CD8-positive, alpha-beta memory T cell (primary cell): ENCODE measurements at regions of chr7 and their contacts with region 1.

Region 1: DNA sequence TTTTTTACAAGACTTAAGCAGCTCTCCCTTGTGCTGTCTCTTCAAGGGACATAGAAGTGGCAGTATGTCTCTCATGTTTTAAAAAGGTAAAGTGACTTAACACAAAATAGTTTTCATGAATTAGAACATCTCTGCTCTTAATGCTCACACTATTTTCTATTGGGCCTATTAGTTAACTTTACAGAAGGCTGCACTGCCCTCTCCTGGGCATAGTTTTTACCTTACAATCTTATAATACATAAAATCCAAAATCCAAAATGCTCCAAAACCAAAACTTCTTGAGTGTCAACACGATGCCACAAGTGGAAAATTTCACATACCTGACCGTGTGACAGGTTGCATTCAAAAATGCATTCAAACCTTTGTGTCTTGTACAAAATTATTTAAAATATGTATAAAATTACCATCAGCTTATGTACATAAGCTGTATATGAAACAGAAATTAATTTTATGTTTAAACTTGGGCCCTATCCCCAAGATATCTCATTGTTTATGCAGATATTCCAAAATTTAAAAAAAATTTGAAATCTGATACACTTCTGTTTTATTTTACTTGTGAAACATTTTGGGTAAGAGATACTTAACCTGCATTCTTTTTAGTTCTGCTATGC is 25.8 kb downstream of the TES start:
- DNase-seq: peak; percentile 36 to 67 (median 52)
- H3K4me3 ChIP-seq: no peak overlapping the region
- H3K4me3 Mint-ChIP-seq: no peak overlapping the region
- H3K27ac ChIP-seq: no peak overlapping the region
- H3K27ac Mint-ChIP-seq: peak overlapping the region in 5 of 8 donors; percentile 0 to 77 (median 25)
- H3K4me1 ChIP-seq: peaks cover 43% of the 10 kb centered on the region
- H3K4me1 Mint-ChIP-seq: peaks cover 80 to 90% (median 87%) of the 10 kb centered on the region in 3 donors
- H3K27me3 ChIP-seq: no peaks in the 10 kb centered on the region
- H3K27me3 Mint-ChIP-seq: no peaks in the 10 kb centered on the region

Region 2: GRCh38 chr7:116180302-116180701 is 55.8 kb before region 1 on chr7:
- CTCF ChIA-PET with region 1: interaction called, 167 read pairs
- POLR2A ChIA-PET with region 1: interaction called, 5 read pairs
- DNase-seq: peak in 3 of 5 donors; percentile 9 to 58 (median 47)
- H3K4me3 ChIP-seq: no peak overlapping the region
- H3K4me3 Mint-ChIP-seq: no peak overlapping the region
- H3K27ac ChIP-seq: no peak overlapping the region
- H3K27ac Mint-ChIP-seq: no peak overlapping the region
- H3K4me1 ChIP-seq: no peaks in the 10 kb centered on the region
- H3K4me1 Mint-ChIP-seq: peaks cover 6 to 10% (median 9%) of the 10 kb centered on the region in 3 donors
- H3K27me3 ChIP-seq: no peaks in the 10 kb centered on the region
- H3K27me3 Mint-ChIP-seq: peaks cover 3 to 4% of the 10 kb centered on the region in 2 donors

Region 3: DNA sequence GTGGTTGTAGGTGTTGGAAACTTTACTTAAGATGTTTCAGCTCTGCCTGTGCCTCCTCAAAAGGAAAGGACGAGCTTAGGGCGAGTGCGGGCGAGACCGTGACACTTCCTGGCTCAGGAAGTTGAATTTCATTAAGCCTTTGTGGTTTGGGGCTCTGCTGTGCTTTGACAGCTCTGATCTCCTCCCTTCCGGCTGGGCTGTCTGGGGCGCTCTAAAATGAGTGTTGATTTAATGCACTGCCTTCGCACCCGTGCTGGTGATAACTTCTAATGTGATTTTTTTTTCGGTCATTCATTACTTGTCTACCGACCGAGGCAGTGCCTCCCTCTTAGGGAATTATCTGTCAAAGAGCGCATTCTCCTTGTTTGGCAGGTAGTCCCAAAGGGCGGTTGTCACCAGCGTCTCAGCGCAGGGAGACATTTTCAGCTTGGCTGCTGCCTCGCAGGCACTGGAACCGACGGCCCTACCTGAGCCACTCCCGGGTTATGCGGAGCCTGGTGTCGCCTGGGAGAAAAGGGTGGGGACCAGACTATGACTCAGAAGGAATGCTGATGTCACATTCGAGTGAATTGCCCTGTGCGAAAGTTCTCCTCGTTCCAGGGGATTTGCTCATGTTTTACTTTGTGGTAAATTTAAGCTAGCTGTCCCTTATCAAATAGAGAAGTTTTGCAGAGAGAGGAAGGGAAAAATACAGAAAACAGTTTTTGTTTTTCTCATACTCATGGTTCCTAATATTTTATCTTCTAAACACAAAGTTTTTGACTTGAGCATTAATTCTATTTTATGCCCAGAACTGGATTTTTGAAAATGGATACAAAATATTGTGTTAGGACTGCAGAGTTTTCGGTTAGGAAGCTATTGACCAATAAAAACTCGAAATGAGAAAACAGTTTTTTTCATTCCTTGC is 24.9 kb before region 1 on chr7:
- CTCF ChIA-PET with region 1: interaction called, 71 read pairs
- POLR2A ChIA-PET with region 1: interaction called, 10 read pairs
- DNase-seq: peak; percentile 69 to 86 (median 86)
- H3K4me3 ChIP-seq: peak overlapping the region; percentile 83
- H3K4me3 Mint-ChIP-seq: peak overlapping the region; percentile 91 to 99 (median 97)
- H3K27ac ChIP-seq: peak overlapping the region; percentile 89
- H3K27ac Mint-ChIP-seq: peak overlapping the region; percentile 95 to 99 (median 98)
- H3K4me1 ChIP-seq: peaks cover 52% of the 10 kb centered on the region
- H3K4me1 Mint-ChIP-seq: peaks cover 49 to 64% (median 60%) of the 10 kb centered on the region in 3 donors
- H3K27me3 ChIP-seq: no peaks in the 10 kb centered on the region
- H3K27me3 Mint-ChIP-seq: no peaks in the 10 kb centered on the region

Region 4: DNA sequence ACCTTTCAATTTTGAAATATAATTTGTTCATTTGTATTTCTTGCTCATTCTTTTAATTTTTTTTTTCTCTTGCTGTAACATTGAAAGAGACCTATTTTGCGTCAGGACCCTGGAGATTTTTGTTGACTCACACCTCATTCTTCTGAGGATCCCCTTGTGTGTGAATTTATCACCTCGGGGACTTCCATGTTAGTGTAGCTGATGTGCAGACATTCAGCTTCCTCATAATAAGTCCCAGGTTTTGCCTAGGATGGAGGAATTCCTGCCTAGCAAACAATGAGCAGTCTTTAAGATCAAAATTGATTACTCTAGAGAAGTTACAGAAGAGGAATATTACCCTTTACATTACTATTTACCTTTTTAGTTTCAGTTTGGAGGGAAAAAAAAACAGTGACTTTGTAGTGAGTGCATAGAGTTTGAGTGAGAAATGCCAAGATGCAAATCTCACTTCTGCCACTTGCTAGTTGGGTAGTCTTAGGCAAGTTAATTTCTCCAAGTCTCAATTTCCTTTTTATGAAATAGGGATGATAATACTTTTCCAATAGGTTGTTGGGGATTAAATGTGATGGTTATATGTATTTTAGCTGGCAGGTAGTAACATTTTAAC is 11.5 kb before region 1 on chr7:
- CTCF ChIA-PET with region 1: interaction called, 16 read pairs
- POLR2A ChIA-PET with region 1: no interaction called
- DNase-seq: no peak
- H3K4me3 ChIP-seq: peak overlapping the region; percentile 14
- H3K4me3 Mint-ChIP-seq: peak overlapping the region in 6 of 7 donors; percentile 48 to 79 (median 74)
- H3K27ac ChIP-seq: no peak overlapping the region
- H3K27ac Mint-ChIP-seq: peak overlapping the region; percentile 0 to 85 (median 60)
- H3K4me1 ChIP-seq: peaks cover 84% of the 10 kb centered on the region
- H3K4me1 Mint-ChIP-seq: peaks cover 88 to 96% (median 94%) of the 10 kb centered on the region in 3 donors
- H3K27me3 ChIP-seq: no peaks in the 10 kb centered on the region
- H3K27me3 Mint-ChIP-seq: no peaks in the 10 kb centered on the region

Region 5: DNA sequence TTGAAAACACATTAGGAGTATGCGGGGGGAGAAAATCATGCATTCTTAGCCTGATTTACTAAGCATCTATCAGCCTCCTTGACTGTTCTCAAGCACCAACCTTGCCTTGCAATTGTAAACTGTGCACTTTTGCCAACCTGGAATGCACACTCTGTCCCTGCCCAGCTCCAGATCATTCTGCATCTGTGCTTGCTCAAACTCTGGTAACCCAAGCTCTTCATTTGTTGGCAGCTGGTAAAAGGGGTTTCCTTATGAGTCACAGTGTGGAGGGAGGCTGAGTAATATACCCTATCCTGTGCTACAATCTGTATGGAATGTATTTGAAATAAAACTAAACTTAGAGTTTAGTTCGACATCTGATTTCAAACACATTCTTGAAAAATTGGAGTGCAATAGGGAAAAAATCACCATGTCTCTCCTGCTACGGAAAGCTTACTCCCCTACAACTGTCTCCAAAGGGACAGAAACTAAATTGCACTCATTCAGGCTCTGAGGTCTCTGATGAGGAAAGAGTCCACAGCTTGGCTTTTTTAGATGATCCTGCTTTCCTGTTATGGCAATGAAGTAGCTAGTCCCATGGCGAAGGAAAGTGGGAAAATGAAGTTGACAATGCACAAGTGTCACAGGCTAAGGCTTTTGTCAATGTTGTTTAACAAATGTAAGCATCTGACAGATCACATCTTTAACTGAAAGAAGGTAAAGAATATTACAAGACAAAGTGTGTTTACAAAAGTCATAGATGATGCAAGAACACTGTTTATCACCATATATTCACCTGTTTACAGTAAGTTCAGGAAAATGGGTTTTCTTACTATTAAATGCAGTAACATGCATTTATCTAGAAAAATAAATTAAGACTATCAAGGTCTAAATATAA is 36.1 kb after region 1 on chr7:
- CTCF ChIA-PET with region 1: no interaction called
- POLR2A ChIA-PET with region 1: no interaction called
- DNase-seq: no peak
- H3K4me3 ChIP-seq: no peak overlapping the region
- H3K4me3 Mint-ChIP-seq: no peak overlapping the region
- H3K27ac ChIP-seq: no peak overlapping the region
- H3K27ac Mint-ChIP-seq: no peak overlapping the region
- H3K4me1 ChIP-seq: no peaks in the 10 kb centered on the region
- H3K4me1 Mint-ChIP-seq: no peaks in the 10 kb centered on the region
- H3K27me3 ChIP-seq: no peaks in the 10 kb centered on the region
- H3K27me3 Mint-ChIP-seq: peaks cover 11 to 40% of the 10 kb centered on the region in 2 donors

Region 6: DNA sequence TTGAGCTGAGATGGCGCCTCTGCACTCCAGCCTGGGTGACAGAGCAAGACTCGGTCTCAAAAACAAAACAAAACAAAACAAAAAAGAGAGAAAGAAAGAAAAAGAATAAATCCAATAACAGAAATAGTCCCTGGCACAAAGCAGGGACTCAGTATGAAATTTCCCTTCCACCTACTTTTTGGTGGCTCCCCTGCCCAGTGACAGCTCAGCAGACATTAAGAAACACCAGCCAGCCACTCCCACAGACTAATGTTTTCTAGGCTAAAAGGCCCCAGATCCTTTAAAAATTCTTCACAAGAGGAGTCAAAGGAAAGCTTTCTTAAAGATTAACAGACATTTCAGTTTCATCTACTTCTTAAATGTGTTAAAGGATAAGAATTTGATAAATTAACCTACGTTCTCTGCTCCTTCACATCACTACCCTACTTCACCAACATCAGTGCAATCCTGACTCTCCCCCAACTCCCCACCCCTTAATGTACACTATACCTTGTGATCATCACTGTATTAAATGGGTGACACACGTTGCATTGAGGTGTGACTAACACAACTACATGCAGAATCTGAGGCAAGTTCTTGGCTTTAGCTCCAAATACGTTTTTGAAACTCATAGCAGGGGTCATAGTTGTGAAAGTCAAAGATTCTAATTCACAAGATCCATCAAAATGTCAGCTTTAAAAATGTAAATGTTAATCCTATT is 149.0 kb after region 1 on chr7:
- CTCF ChIA-PET with region 1: no interaction called
- POLR2A ChIA-PET with region 1: no interaction called
- DNase-seq: no peak
- H3K4me3 ChIP-seq: no peak overlapping the region
- H3K4me3 Mint-ChIP-seq: no peak overlapping the region
- H3K27ac ChIP-seq: no peak overlapping the region
- H3K27ac Mint-ChIP-seq: no peak overlapping the region
- H3K4me1 ChIP-seq: no peaks in the 10 kb centered on the region
- H3K4me1 Mint-ChIP-seq: no peaks in the 10 kb centered on the region
- H3K27me3 ChIP-seq: no peaks in the 10 kb centered on the region
- H3K27me3 Mint-ChIP-seq: peaks cover 2 to 25% of the 10 kb centered on the region in 2 donors